Activated CD8-positive, alpha-beta T cell treated with anti-CD3 and anti-CD28 coated beads for 36 hours (primary cell): ENCODE measurements at regions of chr7 and their contacts with region 1.

Region 1: DNA sequence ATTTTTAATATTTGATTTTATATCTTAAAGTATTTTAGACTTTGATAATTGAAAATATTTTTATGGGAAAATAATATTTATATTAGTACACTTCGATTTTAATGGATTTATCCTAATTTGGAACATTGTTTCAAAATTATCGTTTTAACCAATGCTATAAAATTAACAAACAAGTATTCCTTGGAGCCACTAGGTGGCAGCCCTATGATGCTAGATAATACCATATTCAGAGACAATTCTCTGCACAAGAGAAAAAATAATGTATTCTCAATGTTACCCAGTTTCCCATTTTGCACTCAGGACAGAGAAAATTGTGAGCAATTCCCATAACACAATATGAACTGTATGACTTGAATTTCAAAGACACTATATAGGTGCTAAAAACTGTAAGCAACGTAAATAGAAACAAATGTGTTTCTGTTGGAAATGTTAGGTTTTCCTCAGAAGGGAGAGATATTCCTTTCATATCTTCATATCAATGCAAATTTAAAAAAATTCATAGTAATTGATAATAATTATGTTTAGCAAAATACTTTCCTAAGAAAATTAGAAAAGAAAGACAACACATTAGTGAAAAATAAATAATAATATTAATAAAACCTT is 237.8 kb downstream of the SEMA3E start:
- DNase-seq: peak; percentile 16
- ATAC-seq: no peak
- H3K4me3 Mint-ChIP-seq: no peak overlapping the region
- H3K27ac Mint-ChIP-seq: no peak overlapping the region
- H3K4me1 Mint-ChIP-seq: no peaks in the 10 kb centered on the region
- H3K27me3 Mint-ChIP-seq: no peaks in the 10 kb centered on the region
- CTCF ChIP-seq: peak; percentile 61

Region 2: DNA sequence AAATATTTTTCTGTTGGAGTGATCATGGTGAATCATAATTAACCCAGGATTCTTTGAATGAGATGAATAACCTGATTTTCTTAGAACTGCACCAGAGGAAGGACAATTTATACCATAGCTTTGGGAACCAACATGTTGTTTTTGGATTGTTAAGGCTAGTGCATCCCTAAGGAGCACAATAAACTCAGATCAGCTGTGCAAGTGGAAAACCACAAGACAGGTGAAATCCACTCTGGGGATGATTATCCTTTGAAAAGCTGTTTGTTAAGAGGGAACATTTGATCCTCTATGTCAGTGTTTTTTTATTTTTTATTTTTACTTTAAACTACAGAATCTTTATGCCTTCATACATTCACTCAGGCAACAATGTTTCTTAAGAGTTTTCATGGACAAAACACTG is 16.3 kb before region 1 on chr7:
- CTCF ChIA-PET with region 1: no interaction called
- POLR2A ChIA-PET with region 1: no interaction called
- intact Hi-C with region 1: no loop called
- DNase-seq: no peak
- ATAC-seq: no peak
- H3K4me3 Mint-ChIP-seq: no peak overlapping the region
- H3K27ac Mint-ChIP-seq: no peak overlapping the region
- H3K4me1 Mint-ChIP-seq: no peaks in the 10 kb centered on the region
- H3K27me3 Mint-ChIP-seq: no peaks in the 10 kb centered on the region
- CTCF ChIP-seq: no peak

Region 3: GRCh38 chr7:83649708-83650107 is 238.6 kb after region 1 on chr7:
- CTCF ChIA-PET with region 1: no interaction called
- POLR2A ChIA-PET with region 1: no interaction called
- intact Hi-C with region 1: loop called (anchors 5 kb)
- DNase-seq: no peak
- ATAC-seq: no peak
- H3K4me3 Mint-ChIP-seq: no peak overlapping the region
- H3K27ac Mint-ChIP-seq: no peak overlapping the region
- H3K4me1 Mint-ChIP-seq: no peaks in the 10 kb centered on the region
- H3K27me3 Mint-ChIP-seq: peaks cover 11% of the 10 kb centered on the region
- CTCF ChIP-seq: no peak